ENCODE measurements at regions of chr3 and their contacts with region 1.

Region 1: DNA sequence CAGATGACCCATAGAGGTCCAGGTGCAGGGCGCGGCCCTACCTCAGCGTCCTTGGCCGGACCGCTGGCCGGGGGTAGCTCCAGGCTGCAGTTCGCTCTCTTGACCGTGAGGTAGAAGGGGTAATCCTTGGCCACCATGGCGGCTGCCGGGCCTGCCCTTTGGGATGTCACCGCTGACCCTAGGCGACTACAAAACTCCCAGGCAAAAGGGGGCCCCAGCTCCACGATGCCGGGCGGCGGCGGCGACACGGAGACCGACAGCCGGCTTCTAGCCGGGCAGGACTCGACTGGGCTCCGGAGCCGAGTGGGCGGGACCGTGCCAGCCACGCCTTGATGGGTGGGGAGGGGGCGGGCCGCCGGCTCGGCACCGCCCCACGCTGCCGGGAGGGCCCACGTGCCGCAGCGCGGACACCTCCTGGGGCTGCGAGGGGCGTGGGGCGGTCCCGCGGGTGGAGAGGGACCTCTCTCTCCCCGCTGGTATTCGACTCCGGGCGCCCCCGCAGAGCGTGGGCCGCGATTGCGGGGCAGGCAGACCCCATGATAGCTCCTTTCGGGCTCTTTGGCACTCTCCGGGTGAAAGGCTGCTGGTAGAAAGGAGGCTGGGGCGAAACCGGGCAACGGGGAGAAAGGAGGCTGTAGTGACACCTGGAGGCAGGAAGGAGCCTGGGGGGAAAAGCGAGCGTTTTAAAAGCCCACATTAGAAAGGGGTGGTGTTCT is at the start of gene ARHGEF3:
- DNase-seq: peak; percentile 85 to 90 (median 88)
- ATAC-seq: peak; percentile 91
- H3K4me3 ChIP-seq: peak within 1 kb of the TSS; percentile 51 to 57
- H3K27ac ChIP-seq: peak within 1 kb of the TSS; percentile 65 to 85 (median 76)
- H3K4me1 ChIP-seq: peaks cover 26% of the 10 kb centered on the region
- H3K27me3 ChIP-seq: no peaks in the 10 kb centered on the region
- CTCF ChIP-seq: peak; percentile 44 to 81 (median 72)
- POLR2A ChIP-seq: peak; percentile 70 to 88 (median 87)
- total RNA-seq, gene ARHGEF3: 27.4 to 38.7 TPM

Region 2: DNA sequence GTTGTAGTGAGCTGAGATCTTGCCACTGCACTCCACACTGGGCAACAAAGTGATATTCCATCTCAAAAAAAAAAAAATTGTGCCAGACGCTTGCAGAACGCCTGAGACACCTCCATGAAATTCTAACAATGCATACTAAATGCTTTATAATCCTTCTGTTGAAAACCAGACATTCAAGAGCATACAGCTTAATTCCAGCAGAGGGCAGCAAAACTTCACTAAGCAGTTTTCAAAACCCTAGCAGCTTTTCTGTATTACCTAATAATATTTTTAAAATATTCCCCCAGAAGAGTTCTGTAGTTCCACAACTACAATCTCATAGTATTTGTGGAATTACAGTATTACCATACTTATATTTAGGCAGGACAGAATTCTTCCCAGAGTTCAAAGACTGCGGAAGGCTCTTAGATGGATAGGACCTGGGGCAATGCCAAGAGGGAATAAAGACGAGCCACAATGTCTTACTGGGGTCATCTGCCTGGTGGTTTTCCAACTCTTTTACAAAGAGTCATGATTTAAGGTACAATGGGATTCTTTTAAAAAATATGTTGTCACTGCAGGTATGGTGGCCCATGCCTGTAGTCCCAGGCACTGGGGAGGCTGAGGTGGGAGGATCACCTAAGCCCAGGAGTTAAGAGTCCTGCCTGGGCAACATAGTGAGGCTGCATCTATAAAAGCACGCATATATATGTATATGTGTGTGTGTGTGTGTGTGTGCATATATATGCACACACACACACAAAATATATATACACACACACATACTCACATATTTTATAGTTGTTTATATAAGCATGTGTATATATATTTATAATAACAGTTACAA is 99.1 kb before region 1 on chr3:
- intact Hi-C with region 1: loop called (anchors 5 kb)
- DNase-seq: peak; percentile 60 to 80 (median 64)
- ATAC-seq: peak; percentile 79
- H3K4me3 ChIP-seq: no peak overlapping the region
- H3K27ac ChIP-seq: no peak overlapping the region
- H3K4me1 ChIP-seq: peaks cover 3% of the 10 kb centered on the region
- H3K27me3 ChIP-seq: no peaks in the 10 kb centered on the region
- CTCF ChIP-seq: peak; percentile 65 to 95 (median 88)
- POLR2A ChIP-seq: no peak

Region 3: DNA sequence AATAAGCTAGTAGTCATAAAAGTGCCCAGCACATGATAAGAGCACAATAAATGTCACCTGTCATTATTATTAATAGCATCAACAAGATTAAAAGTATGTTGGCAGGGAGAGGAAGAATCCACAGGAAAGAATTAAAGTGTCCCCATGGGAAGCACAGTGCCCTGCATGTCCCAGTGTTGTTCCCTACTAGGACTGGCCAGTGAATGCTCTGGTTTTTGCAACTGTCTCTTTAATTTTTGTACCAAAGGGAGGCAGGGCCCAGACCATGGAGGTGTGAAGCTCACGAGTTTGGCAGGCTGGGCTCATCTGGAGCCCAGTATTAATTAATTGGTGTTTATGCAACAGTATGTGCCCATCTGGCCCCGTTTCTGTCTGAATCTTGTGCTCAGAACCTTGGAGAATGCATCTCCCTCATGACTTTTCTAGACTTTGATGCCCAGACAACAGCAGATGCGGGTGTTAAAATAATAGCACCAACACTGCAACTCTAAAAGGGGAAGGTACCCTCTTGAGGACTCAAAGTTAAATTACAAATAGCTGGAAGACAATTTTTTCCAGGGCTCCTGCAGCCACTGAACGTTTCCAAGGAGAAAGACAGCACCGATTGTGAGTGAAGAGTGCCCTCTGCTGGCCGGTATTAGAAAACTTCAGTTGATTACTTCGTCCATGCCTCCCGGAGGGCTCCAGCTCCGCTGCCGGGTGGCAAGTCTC is 186.8 kb after region 1 on chr3:
- intact Hi-C with region 1: loop called (anchors 10 kb)
- DNase-seq: peak; percentile 81 to 87 (median 84)
- ATAC-seq: peak; percentile 69
- H3K4me3 ChIP-seq: no peak overlapping the region
- H3K27ac ChIP-seq: peak overlapping the region in 2 of 4 donors; percentile 34 to 71
- H3K4me1 ChIP-seq: peaks cover 27% of the 10 kb centered on the region
- H3K27me3 ChIP-seq: no peaks in the 10 kb centered on the region
- CTCF ChIP-seq: peak; percentile 61 to 89 (median 80)
- POLR2A ChIP-seq: no peak

Measured in body of pancreas (tissue), 4 donors.